Caco-2 (cell line): ENCODE measurements at regions of chr6 and their contacts with region 1.

Region 1: DNA sequence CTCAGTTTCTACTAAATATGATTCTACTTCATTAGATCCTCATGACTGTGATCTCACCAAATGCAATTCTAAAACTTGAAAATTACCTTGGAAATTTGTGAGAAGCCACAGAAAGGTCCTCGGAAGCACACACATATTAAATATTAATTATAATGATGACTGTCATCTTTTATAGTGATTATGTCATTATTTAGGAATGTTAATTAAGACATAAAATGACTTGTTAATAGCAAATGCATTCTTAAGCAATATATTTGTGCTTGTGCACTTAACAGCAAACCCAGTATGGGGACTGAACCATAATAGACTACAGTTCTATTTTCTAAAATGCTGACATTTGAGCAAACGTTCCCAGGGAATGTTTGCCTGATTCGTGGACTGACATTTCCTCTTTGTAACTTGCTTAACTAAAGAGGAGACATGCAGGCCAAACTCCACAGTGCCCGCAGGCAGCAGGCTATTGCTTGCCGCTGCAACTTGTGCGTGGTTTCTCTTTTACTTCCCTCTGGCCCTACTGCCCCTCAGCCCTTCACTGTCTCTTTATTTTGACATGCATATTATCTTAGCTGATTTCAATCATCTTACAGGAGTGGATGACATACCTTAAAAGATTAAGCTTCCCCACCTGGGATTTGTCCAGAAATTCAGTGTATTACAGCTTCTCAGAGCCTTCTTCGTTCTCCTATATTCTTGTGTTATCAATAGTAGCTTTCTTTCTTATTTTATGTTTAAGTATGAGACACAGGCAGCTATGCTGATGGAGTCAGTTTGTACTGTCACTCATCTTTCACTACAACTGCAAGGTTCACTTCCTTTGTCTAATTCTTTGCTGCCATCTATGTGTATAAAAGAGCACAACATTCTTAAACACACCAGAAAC is 141.5 kb downstream of the GMDS start:
- DNase-seq: peak in 1 of 2 experiments; percentile 34
- H3K4me3 ChIP-seq: no peak overlapping the region
- H3K4me3 Mint-ChIP-seq: no peak overlapping the region
- H3K27ac Mint-ChIP-seq: no peak overlapping the region
- H3K4me1 ChIP-seq: no peaks in the 10 kb centered on the region
- H3K4me1 Mint-ChIP-seq: peaks cover 7% of the 10 kb centered on the region
- H3K27me3 ChIP-seq: no peaks in the 10 kb centered on the region
- H3K27me3 Mint-ChIP-seq: no peaks in the 10 kb centered on the region
- CTCF ChIP-seq: peak in 1 of 2 experiments; percentile 58

Region 2: GRCh38 chr6:2008383-2008976 is 95.4 kb before region 1 on chr6:
- CTCF ChIA-PET with region 1: no interaction called
- POLR2A ChIA-PET with region 1: no interaction called
- intact Hi-C with region 1: no loop called
- DNase-seq: no peak
- H3K4me3 ChIP-seq: no peak overlapping the region
- H3K4me3 Mint-ChIP-seq: no peak overlapping the region
- H3K27ac Mint-ChIP-seq: no peak overlapping the region
- H3K4me1 ChIP-seq: no peaks in the 10 kb centered on the region
- H3K4me1 Mint-ChIP-seq: no peaks in the 10 kb centered on the region
- H3K27me3 ChIP-seq: no peaks in the 10 kb centered on the region
- H3K27me3 Mint-ChIP-seq: no peaks in the 10 kb centered on the region
- CTCF ChIP-seq: no peak

Region 3: DNA sequence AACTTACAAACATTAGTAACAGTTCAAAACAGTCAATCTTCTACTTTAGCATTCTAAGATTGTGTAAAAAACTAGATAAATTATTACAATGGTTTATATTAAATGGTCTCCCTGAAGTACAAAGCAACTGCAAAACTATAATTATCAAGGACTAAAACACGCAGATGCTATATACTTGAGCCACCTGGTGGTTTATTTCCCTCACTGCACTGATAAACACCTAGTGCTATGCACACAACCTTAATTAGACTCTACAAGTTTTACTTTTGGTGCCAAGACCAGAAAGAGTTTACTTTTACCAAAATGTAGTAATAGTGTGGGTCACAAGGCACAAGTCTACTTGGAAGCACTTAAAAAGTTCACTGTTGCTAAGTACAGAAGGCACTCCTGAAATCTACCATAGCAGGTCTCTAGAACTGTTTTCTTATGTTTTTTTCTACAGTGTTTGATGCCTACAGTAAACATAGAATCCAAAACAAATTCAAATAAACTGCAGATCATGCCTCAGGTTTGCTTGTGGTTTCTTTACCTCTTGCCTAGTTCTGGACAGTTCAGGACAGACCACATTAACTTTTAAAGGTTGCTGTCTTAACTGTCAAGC is 92.3 kb after region 1 on chr6:
- CTCF ChIA-PET with region 1: no interaction called
- POLR2A ChIA-PET with region 1: no interaction called
- intact Hi-C with region 1: loop called (anchors 10 kb)
- DNase-seq: peak in 1 of 2 experiments; percentile 42
- H3K4me3 ChIP-seq: no peak overlapping the region
- H3K4me3 Mint-ChIP-seq: no peak overlapping the region
- H3K27ac Mint-ChIP-seq: no peak overlapping the region
- H3K4me1 ChIP-seq: no peaks in the 10 kb centered on the region
- H3K4me1 Mint-ChIP-seq: no peaks in the 10 kb centered on the region
- H3K27me3 ChIP-seq: no peaks in the 10 kb centered on the region
- H3K27me3 Mint-ChIP-seq: no peaks in the 10 kb centered on the region
- CTCF ChIP-seq: peak; percentile 66 to 71

Region 4: GRCh38 chr6:2275892-2276242 is 172.0 kb after region 1 on chr6:
- CTCF ChIA-PET with region 1: no interaction called
- POLR2A ChIA-PET with region 1: no interaction called
- intact Hi-C with region 1: no loop called
- DNase-seq: no peak
- H3K4me3 ChIP-seq: no peak overlapping the region
- H3K4me3 Mint-ChIP-seq: no peak overlapping the region
- H3K27ac Mint-ChIP-seq: peak overlapping the region; percentile 69
- H3K4me1 ChIP-seq: no peaks in the 10 kb centered on the region; the same call in 1 of the 2 replicates
- H3K4me1 Mint-ChIP-seq: peaks cover 7% of the 10 kb centered on the region
- H3K27me3 ChIP-seq: no peaks in the 10 kb centered on the region
- H3K27me3 Mint-ChIP-seq: no peaks in the 10 kb centered on the region
- CTCF ChIP-seq: no peak